Common myeloid progenitor, CD34-positive (primary cell): ENCODE measurements at regions of chr15 and their contacts with region 1.

Region 1: DNA sequence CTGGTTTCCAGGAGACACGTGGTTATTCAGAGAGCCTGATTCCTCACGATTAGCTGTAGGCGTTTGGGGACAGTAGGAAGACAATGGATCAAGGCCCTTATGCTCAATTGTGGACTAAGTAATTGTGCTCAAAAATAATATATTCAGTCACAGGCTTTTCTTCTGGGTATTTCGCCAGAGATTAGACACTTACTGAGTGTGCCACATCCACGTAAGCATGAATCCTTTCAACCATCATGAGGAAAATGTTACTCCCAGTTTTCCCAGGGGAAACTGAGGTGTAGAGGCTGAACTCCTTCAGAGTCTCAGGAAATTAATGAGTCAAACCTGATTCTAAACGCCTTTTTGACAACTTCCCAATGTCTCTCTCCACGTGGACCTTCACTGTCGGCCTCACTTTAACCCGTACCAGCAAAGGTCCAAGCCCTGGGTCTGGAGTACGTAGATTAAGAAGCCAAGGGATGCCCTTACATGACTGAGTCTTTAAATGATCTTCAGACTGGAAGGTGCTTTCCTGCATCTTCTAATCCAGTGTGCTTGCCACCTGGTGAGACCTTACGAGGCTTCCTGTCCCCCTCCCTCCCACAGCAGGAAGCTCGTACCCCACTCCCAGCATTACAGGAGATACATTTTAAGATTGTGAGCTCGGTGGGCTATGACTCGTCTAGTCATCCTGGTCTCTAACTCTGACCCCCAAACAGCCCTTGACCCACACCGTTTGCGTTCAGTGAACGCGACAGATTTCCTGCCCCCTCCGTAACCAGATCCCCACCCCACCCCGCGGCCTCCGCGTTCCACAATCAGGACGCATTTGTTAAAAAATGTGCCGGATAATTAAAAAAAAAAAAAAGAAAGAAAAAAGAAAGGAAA is 1.7 kb downstream of the PKM start:
- DNase-seq: peak in 2 of 3 donors; percentile 52 to 62
- H3K4me3 ChIP-seq: peak overlapping the region; percentile 74 to 94 (median 86)
- H3K27ac ChIP-seq: peak overlapping the region in 1 of 2 experiments; percentile 81
- H3K4me1 ChIP-seq: peaks cover 27 to 60% (median 56%) of the 10 kb centered on the region in 4 experiments
- H3K27me3 ChIP-seq: no peaks in the 10 kb centered on the region

Region 2: DNA sequence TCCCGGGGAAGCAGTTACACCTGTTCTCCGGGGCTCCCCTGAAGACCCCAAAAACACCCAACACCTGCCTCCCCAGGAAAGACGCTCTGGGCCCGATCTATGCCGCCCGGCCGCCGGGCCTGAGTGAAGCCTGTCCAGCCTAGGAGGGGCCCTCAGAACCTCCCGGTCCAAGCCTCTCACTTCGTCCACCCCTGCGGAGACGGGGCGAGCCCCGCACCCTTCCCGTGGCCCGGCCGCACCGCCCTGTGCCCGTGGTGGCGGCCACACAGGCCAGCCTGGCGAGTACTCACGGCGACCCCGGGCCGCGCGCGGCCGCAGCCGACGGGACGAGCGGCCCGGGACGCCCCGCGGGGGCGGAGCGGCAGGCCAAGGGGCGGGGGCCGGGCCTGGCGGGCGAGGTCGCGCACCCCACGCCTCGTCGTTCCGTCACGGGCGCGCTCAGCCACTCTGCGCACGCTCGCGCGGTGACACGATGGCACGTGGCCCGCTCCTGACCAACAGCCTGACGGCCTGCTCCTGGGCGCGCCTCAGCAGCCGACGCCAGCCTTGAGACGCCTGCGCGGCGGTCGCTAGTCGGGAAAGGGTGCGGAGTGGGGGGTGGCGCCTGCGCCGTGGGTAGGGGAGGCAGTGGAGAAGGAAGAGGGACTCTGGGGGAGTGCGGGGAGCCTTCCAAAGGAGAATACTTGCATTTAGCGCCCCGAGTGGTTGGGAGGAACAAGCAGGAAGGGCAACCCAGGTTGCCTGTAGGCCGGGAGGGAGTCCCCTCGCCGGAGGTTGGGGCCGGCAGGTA is 43.1 kb after region 1 on chr15 and contains the start of gene PARP6:
- CTCF ChIA-PET with region 1: interaction called, 11 read pairs
- POLR2A ChIA-PET with region 1: interaction called, 3 read pairs
- DNase-seq: peak; percentile 99
- H3K4me3 ChIP-seq: peak within 1 kb of the TSS; percentile 81 to 91 (median 87)
- H3K27ac ChIP-seq: peak within 1 kb of the TSS; percentile 69 to 86
- H3K4me1 ChIP-seq: peaks cover 9 to 23% (median 20%) of the 10 kb centered on the region in 4 experiments
- H3K27me3 ChIP-seq: no peaks in the 10 kb centered on the region

Region 3: GRCh38 chr15:72599855-72600464 is 370.6 kb after region 1 on chr15:
- CTCF ChIA-PET with region 1: no interaction called
- POLR2A ChIA-PET with region 1: no interaction called
- DNase-seq: peak; percentile 44 to 64 (median 50)
- H3K4me3 ChIP-seq: no peak overlapping the region
- H3K27ac ChIP-seq: no peak overlapping the region
- H3K4me1 ChIP-seq: no peaks in the 10 kb centered on the region
- H3K27me3 ChIP-seq: peaks cover 0 to 2% (median 0%) of the 10 kb centered on the region in 5 experiments